Thyroid gland (tissue), 4 donors: ENCODE measurements at regions of chr20 and their contacts with region 1.

Region 1: GRCh38 chr20:815914-816606 is 17.5 kb upstream of the FAM110A start:
- DNase-seq: peak; percentile 62 to 63
- H3K4me3 ChIP-seq: no peak overlapping the region
- H3K27ac ChIP-seq: no peak overlapping the region
- H3K4me1 ChIP-seq: no peaks in the 10 kb centered on the region
- H3K27me3 ChIP-seq: no peaks in the 10 kb centered on the region
- CTCF ChIP-seq: peak; percentile 91 to 98 (median 96)
- POLR2A ChIP-seq: no peak

Region 2: DNA sequence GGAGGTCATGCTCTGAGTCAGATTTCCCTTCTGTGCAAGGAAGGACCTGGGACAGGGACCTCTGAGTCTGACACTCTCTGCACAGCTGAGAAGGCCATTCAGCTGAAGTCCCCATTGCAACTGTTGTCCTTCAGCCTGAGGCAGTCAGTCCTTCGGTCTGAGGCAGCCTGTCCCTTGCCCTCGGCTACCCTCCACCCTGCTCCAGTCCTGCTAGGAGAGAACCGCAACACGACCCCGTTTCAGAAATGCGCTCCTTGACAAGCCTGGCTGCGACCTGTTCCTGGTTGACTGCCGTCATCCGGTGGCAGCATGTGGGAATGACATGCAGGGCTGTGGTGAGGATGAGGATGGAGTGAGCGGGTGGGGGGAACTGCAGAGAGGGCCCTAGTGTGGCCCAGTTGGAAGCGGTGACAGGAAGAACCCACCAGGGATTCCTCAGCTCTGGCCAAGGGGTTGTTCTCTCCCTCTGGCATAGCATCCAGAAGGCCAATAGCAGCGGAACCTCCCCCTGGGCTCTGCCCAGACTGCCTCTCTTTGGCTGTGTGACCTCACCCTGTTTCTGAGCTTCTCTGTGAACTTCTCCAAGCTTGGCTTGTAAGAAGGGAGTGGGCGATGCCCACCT is 140.4 kb after region 1 on chr20:
- intact Hi-C with region 1: loop called (anchors 2 kb)
- DNase-seq: peak; percentile 72 to 77
- H3K4me3 ChIP-seq: no peak overlapping the region
- H3K27ac ChIP-seq: peak overlapping the region in 1 of 3 donors; percentile 77
- H3K4me1 ChIP-seq: peaks cover 27 to 32% of the 10 kb centered on the region in 2 donors
- H3K27me3 ChIP-seq: no peaks in the 10 kb centered on the region
- CTCF ChIP-seq: peak; percentile 89 to 99 (median 98)
- POLR2A ChIP-seq: no peak

Region 3: GRCh38 chr20:1108437-1108920 is 292.4 kb after region 1 on chr20:
- intact Hi-C with region 1: loop called (anchors 5 kb)
- DNase-seq: peak; percentile 65
- H3K4me3 ChIP-seq: no peak overlapping the region
- H3K27ac ChIP-seq: no peak overlapping the region
- H3K4me1 ChIP-seq: peaks cover 0 to 3% of the 10 kb centered on the region in 2 donors
- H3K27me3 ChIP-seq: no peaks in the 10 kb centered on the region
- CTCF ChIP-seq: peak; percentile 41 to 87 (median 67)
- POLR2A ChIP-seq: no peak

Region 4: DNA sequence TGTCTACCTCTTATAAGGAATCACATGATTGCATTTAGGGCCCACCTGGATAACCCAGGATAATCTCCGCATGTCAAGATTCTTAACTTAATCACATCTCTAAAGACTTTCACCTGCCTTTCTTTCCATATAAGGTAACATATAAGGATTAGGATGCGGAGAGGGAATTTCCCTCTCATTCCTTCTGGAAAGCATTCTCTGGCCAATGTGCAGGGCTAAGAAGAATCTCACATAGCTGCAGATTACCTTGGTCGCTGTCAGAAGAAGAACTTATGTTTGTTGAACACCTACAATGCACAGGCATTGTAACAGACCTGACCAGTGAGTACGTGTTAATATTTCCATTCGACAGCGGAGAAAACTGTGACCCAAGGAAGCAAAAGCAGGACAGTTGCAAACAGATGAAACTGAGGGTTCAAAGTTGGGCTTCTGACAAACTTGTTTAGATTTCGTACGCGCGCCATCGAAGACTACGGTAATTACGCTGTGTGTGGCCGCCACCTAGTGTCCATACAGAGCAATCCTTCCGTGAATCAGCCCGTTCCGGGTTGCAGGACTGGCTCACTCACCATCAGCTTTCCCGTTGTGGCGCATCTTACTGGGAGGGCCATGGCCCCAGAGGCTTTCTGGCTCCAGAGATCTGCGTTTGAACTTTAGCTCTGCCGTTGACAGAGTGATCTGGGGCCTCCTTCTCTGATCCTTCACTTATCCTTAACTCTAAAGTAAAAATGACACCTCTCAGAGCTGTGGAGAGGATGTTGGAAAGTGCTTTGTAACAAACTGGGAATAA is 396.7 kb after region 1 on chr20:
- intact Hi-C with region 1: loop called (anchors 5 kb)
- DNase-seq: peak; percentile 67 to 73
- H3K4me3 ChIP-seq: no peak overlapping the region
- H3K27ac ChIP-seq: no peak overlapping the region
- H3K4me1 ChIP-seq: peaks cover 0 to 9% of the 10 kb centered on the region in 2 donors
- H3K27me3 ChIP-seq: no peaks in the 10 kb centered on the region
- CTCF ChIP-seq: peak; percentile 47 to 82 (median 76)
- POLR2A ChIP-seq: no peak